K562 (cell line): ENCODE measurements at regions of chr6 and their contacts with region 1.

Region 1: DNA sequence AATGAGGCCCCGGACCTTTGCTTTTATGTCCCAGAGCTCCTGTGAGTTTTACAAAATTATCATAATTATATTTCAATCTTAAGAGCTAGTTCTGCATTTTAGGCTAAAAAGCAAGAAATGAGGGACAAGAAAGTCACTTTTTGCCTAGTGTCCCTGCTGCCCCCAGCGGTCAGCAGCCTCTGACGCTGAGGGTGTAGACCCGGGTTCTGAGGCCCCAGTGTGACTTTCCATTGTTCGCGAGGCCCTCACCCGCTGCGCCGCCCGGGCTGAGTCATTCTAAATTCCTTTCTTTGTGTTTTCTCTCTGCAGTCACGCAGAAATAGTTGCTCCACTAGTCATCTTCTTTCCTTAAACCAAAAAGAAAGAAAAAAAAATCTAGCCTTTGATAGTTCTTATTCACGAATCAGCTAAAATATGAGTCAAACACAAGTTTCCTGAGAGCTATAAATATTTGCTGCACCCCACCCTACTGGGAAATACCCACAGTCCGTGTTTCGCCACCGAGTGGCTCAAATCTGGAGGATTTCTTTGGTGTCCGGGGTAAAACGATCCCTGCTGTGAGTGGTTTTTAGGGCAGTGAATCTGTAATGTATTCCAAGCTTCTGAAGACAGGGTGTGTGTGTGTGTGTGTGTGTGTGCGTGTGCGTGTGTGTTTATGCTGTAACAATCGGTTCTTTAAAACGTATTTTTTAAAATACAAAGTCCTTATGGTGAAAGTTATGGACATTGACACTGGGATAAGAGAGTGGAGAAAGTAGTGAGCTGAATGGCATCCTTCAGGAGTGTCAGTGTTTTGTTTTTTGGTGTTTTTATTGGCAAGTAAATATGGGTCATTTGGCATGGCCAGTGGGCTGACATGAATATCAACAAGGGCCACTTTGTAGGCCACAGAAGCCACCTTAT is 59.7 kb upstream of the EEF1A1 start:
- DNase-seq: peak; percentile 81 to 93 (median 84)
- ATAC-seq: peak; percentile 98
- H3K4me3 ChIP-seq: peak overlapping the region; percentile 23
- H3K27ac ChIP-seq: peak overlapping the region; percentile 93
- H3K4me1 ChIP-seq: peaks cover 16 to 26% of the 10 kb centered on the region in 2 experiments
- H3K27me3 ChIP-seq: no peaks in the 10 kb centered on the region
- CTCF ChIP-seq: peak; percentile 75 to 88 (median 79)
- EP300 ChIP-seq: no peak
- POLR2A ChIP-seq: peak; percentile 76
- RAD21 ChIP-seq: peak; percentile 49 to 57; a peak in 3 of 4 replicates

Region 2: GRCh38 chr6:73109659-73110058 is 470.8 kb before region 1 on chr6:
- CTCF ChIA-PET with region 1: no interaction called
- POLR2A ChIA-PET with region 1: no interaction called
- in situ Hi-C with region 1: no loop called
- intact Hi-C with region 1: no loop called
- DNase-seq: no peak
- ATAC-seq: no peak
- H3K4me3 ChIP-seq: no peak overlapping the region
- H3K27ac ChIP-seq: no peak overlapping the region
- H3K4me1 ChIP-seq: no peaks in the 10 kb centered on the region; a peak in 1 of 5 replicates
- H3K27me3 ChIP-seq: no peaks in the 10 kb centered on the region
- CTCF ChIP-seq: no peak
- EP300 ChIP-seq: no peak
- POLR2A ChIP-seq: no peak
- RAD21 ChIP-seq: no peak

Region 3: DNA sequence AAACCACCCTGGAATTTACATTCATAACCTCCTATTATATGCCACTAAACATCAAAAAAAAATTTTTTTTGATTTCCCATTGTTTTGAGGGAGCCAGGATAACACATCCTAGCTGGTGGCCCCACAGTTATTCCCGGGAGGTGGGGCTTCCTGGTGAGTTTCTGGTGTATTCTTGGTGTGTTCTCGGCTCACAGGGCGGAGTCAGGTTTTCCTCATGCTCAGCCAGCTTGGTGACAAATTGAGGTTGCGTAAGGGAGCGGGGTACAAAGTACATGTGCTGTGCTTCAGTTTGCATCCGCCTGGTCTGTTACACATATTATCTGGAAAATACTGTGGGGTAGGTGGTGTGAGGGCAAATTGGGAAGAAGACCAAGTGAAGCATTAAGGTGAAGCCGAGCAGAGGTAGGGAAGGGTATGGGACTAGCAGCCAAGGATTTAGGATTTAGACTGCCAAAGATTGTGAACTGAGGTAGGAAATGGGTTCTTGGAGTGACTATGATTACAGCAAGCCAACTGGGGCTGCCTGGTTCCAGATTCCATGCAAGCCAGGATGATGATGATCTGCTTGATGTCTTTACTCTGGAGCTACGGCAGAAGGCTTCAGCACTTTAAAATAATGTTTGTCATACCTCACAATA is 13.4 kb before region 1 on chr6:
- CTCF ChIA-PET with region 1: no interaction called
- POLR2A ChIA-PET with region 1: interaction called, 6 read pairs
- in situ Hi-C with region 1: no loop called
- intact Hi-C with region 1: loop called (anchors 1 kb)
- DNase-seq: peak in 3 of 4 experiments; percentile 26 to 39 (median 31)
- ATAC-seq: peak; percentile 19
- H3K4me3 ChIP-seq: no peak overlapping the region
- H3K27ac ChIP-seq: no peak overlapping the region
- H3K4me1 ChIP-seq: peaks cover 4 to 19% of the 10 kb centered on the region in 2 experiments; a peak in 4 of 5 replicates
- H3K27me3 ChIP-seq: no peaks in the 10 kb centered on the region
- CTCF ChIP-seq: no peak
- EP300 ChIP-seq: no peak
- POLR2A ChIP-seq: no peak
- RAD21 ChIP-seq: no peak

Region 4: DNA sequence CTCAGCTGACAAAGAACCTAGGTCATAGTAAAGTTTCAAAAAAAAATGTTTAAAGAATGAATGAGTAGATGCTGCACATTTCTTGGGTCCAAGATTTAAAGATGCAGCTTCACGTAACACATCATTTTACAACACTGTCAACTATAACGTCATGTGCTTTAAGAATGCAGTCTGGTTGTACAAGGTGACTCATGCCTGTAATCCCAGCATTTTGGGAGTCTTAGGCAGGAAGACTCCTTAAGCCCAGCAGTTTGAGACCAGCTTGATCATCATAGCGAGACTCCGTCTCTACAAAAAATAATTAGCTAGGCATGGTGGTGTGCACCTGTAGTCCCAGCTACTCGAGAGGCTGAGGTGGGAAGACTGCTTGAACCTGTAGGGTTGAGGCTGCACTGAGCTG is 51.4 kb after region 1 on chr6:
- CTCF ChIA-PET with region 1: no interaction called
- POLR2A ChIA-PET with region 1: no interaction called
- in situ Hi-C with region 1: no loop called
- intact Hi-C with region 1: no loop called
- DNase-seq: no peak
- ATAC-seq: no peak
- H3K4me3 ChIP-seq: no peak overlapping the region
- H3K27ac ChIP-seq: no peak overlapping the region
- H3K4me1 ChIP-seq: no peaks in the 10 kb centered on the region
- H3K27me3 ChIP-seq: no peaks in the 10 kb centered on the region
- CTCF ChIP-seq: no peak
- EP300 ChIP-seq: no peak
- POLR2A ChIP-seq: no peak
- RAD21 ChIP-seq: no peak

Region 5: GRCh38 chr6:74690365-74690764 is 1109.9 kb after region 1 on chr6:
- CTCF ChIA-PET with region 1: no interaction called
- POLR2A ChIA-PET with region 1: no interaction called
- in situ Hi-C with region 1: no loop called
- intact Hi-C with region 1: no loop called
- DNase-seq: no peak
- ATAC-seq: no peak
- H3K4me3 ChIP-seq: no peak overlapping the region
- H3K27ac ChIP-seq: no peak overlapping the region
- H3K4me1 ChIP-seq: no peaks in the 10 kb centered on the region
- H3K27me3 ChIP-seq: no peaks in the 10 kb centered on the region
- CTCF ChIP-seq: no peak
- EP300 ChIP-seq: no peak
- POLR2A ChIP-seq: no peak
- RAD21 ChIP-seq: no peak